Mammary epithelial cell (primary cell): ENCODE measurements at regions of chr5 and their contacts with region 1.

Region 1: DNA sequence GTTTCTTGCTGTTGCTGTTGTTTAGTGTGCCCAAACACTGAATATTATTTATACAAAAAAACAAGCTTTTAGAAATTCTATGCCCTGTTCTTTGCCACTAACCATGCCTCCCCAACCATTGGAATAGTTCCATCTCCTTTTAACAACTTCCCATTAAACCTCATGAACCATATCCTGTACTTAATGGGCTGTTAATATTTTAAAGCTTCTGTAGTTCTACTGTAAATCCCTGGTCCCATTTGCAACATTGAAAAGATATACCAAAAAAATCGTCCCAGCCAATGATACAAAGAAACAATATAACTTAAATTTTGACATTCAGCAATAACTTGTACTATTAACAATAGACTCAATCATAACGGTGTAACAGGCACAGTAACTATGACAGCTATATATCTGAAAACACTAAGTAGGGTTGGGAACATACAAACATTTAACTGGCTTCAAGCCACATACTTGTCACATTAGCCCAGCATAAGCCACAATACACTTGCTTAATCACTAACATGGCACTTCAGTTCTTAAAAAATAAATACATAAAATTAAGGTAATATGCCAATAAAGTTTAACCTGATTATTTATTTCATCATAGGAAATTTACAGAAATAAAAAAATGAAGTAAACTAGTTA is 86.1 kb downstream of the ADAMTS6 start:
- DNase-seq: peak; percentile 23
- H3K4me3 ChIP-seq: no peak overlapping the region
- H3K27ac ChIP-seq: no peak overlapping the region
- H3K4me1 ChIP-seq: no peaks in the 10 kb centered on the region
- H3K27me3 ChIP-seq: no peaks in the 10 kb centered on the region
- CTCF ChIP-seq: no peak

Region 2: GRCh38 chr5:65364907-65365306 is 30.7 kb before region 1 on chr5:
- CTCF ChIA-PET with region 1: no interaction called
- dilution Hi-C with region 1: loop called (anchors 5 kb)
- in situ Hi-C with region 1: no loop called
- intact Hi-C with region 1: no loop called
- DNase-seq: no peak
- H3K4me3 ChIP-seq: no peak overlapping the region
- H3K27ac ChIP-seq: no peak overlapping the region
- H3K4me1 ChIP-seq: no peaks in the 10 kb centered on the region
- H3K27me3 ChIP-seq: no peaks in the 10 kb centered on the region
- CTCF ChIP-seq: no peak

Region 3: DNA sequence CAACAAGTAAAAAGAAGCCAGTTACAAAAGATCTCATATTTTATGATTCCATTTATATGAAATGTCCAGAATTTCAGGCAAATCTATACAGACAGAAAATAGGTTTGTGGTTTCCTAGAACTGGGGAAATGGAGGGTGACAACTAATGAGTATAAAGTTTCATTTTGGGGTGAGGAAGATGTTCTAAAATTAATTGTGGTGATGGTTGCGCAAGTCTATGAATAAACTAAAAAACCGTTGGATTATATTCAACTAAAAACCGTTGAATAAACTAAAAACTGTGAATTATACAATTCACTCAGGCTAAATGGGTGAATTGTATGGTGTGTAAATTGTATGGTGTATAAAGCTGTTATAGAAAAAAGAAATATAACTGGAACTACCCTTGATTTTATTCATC is 38.5 kb after region 1 on chr5:
- CTCF ChIA-PET with region 1: no interaction called
- dilution Hi-C with region 1: no loop called
- in situ Hi-C with region 1: no loop called
- intact Hi-C with region 1: no loop called
- DNase-seq: no peak
- H3K4me3 ChIP-seq: no peak overlapping the region
- H3K27ac ChIP-seq: no peak overlapping the region
- H3K4me1 ChIP-seq: no peaks in the 10 kb centered on the region
- H3K27me3 ChIP-seq: no peaks in the 10 kb centered on the region
- CTCF ChIP-seq: no peak